ENCODE measurements at regions of chr17 and their contacts with region 1.

Region 1: GRCh38 chr17:67475236-67475937 is 98.3 kb downstream of the PITPNC1 start:
- DNase-seq: peak; percentile 76 to 83
- ATAC-seq: peak; percentile 54 to 85 (median 70)
- H3K4me3 ChIP-seq: peak overlapping the region in 1 of 10 donors; percentile 13
- H3K27ac ChIP-seq: peak overlapping the region; percentile 54 to 88 (median 80)
- H3K4me1 ChIP-seq: peaks cover 0 to 54% (median 31%) of the 10 kb centered on the region in 9 donors
- H3K27me3 ChIP-seq: no peaks in the 10 kb centered on the region
- CTCF ChIP-seq: peak; percentile 65 to 94 (median 85)

Region 2: GRCh38 chr17:67421869-67422273 is 53.5 kb before region 1 on chr17:
- intact Hi-C with region 1: loop called in 1 of 10 experiments (anchors 5 kb)
- DNase-seq: peak in 1 of 2 donors; percentile 21
- ATAC-seq: peak; percentile 61 to 94 (median 87)
- H3K4me3 ChIP-seq: no peak overlapping the region
- H3K27ac ChIP-seq: peak overlapping the region; percentile 38 to 83 (median 68)
- H3K4me1 ChIP-seq: peaks cover 0 to 47% (median 9%) of the 10 kb centered on the region in 9 donors
- H3K27me3 ChIP-seq: no peaks in the 10 kb centered on the region
- CTCF ChIP-seq: no peak

Region 3: GRCh38 chr17:67431249-67432048 is 43.9 kb before region 1 on chr17:
- intact Hi-C with region 1: loop called in 3 of 10 experiments (anchors 5 kb)
- DNase-seq: no peak
- ATAC-seq: peak in 2 of 8 donors; percentile 14 to 34
- H3K4me3 ChIP-seq: no peak overlapping the region
- H3K27ac ChIP-seq: peak overlapping the region in 7 of 10 donors; percentile 27 to 60 (median 42)
- H3K4me1 ChIP-seq: peaks cover 4 to 59% (median 34%) of the 10 kb centered on the region in 9 donors
- H3K27me3 ChIP-seq: no peaks in the 10 kb centered on the region
- CTCF ChIP-seq: no peak

Region 4: GRCh38 chr17:67647482-67647881 is 172.1 kb after region 1 on chr17:
- intact Hi-C with region 1: no loop called
- DNase-seq: no peak
- ATAC-seq: no peak
- H3K4me3 ChIP-seq: no peak overlapping the region
- H3K27ac ChIP-seq: peak overlapping the region in 1 of 10 donors; percentile 69
- H3K4me1 ChIP-seq: peaks cover 0 to 39% (median 0%) of the 10 kb centered on the region in 9 donors
- H3K27me3 ChIP-seq: no peaks in the 10 kb centered on the region
- CTCF ChIP-seq: no peak

Measured in heart right ventricle (tissue), 16 donors.